HCT116 (cell line): ENCODE measurements at regions of chr16 and their contacts with region 1.

Region 1: DNA sequence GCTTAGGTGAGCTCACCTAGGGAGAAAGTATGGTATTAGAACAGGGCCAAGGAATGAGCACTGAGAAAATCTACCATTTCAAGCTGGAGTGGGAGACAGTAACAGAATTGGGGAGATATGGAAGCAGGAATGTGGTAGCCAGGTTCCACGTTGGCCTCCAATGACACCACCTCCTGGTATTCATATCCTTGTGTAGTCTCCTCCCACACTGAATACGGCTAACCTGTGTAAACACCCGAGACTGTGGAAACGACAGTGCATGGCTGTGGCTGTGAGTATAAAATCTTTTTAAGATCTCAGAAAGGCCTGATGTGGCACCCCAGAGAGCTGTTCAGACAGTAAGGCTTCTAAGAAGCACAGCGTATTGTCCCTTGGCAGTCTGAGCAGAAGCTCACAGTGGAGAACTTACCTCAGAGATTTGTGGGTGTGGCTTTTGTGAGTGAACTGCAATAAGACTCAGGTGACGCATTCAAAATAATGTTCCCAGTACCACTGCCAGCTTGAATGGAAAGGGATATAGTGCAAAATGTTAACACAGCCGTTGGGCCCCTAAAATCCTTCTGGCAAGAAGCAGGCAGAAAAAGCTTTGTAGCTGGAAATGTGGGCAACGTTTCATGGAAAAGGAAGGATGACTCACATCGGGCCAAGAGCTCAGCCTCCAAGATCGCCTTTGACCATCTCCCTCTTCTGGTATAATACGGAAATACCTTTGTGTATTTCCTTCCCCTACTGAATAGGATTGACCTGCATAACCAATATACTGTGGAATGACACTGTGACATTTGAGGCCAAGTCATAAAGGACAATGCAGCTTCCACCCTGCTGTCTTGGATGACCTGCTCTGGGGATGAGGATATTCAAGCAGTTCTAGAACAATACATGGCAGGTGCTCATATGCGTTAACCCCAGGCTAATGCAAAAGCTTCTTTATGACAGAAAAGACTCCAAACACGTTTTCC is 14.3 kb downstream of the SDR42E1 start:
- DNase-seq: peak; percentile 60
- ATAC-seq: peak; percentile 88
- H3K4me3 ChIP-seq: peak overlapping the region in 1 of 2 experiments; percentile 5; a peak in 1 of 4 replicates
- H3K27ac ChIP-seq: peak overlapping the region; percentile 40
- H3K4me1 ChIP-seq: peaks cover 19 to 23% of the 10 kb centered on the region in 2 experiments
- H3K27me3 ChIP-seq: no peaks in the 10 kb centered on the region
- CTCF ChIP-seq: peak; percentile 56 to 64 (median 57); a peak in 5 of 6 replicates
- POLR2A ChIP-seq: no peak
- RAD21 ChIP-seq: peak; percentile 67

Region 2: GRCh38 chr16:80751190-80751589 is 1245.8 kb before region 1 on chr16:
- CTCF ChIA-PET with region 1: no interaction called
- POLR2A ChIA-PET with region 1: no interaction called
- RAD21 ChIA-PET with region 1: no interaction called
- intact Hi-C with region 1: no loop called
- DNase-seq: no peak
- ATAC-seq: no peak
- H3K4me3 ChIP-seq: no peak overlapping the region
- H3K27ac ChIP-seq: no peak overlapping the region
- H3K4me1 ChIP-seq: no peaks in the 10 kb centered on the region
- H3K27me3 ChIP-seq: no peaks in the 10 kb centered on the region
- CTCF ChIP-seq: no peak
- POLR2A ChIP-seq: no peak
- RAD21 ChIP-seq: no peak

Region 3: DNA sequence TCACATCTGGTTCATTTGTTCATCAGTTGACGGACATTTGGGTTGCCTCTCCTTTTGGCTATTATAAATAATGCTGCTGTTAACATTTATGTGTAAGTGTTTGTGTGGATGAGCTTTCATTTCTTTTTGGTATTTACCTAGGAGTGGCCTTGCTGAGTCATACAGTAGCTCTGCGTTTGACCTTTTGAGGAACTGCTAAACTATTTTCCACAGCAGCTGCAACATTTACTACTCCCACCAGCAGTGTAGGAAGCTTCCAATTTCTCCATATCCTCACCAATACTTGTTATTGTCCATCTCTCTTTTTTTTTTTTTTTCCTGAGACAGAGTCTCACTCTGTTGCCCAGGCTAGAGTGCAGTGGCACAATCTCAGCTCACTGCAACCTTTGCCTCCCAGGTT is 238.6 kb before region 1 on chr16:
- CTCF ChIA-PET with region 1: no interaction called
- POLR2A ChIA-PET with region 1: no interaction called
- RAD21 ChIA-PET with region 1: no interaction called
- intact Hi-C with region 1: no loop called
- DNase-seq: peak; percentile 27
- ATAC-seq: peak; percentile 52
- H3K4me3 ChIP-seq: peak overlapping the region in 1 of 2 experiments; percentile 6; a peak in 1 of 4 replicates
- H3K27ac ChIP-seq: no peak overlapping the region
- H3K4me1 ChIP-seq: peaks cover 8 to 21% of the 10 kb centered on the region in 2 experiments
- H3K27me3 ChIP-seq: no peaks in the 10 kb centered on the region
- CTCF ChIP-seq: no peak
- POLR2A ChIP-seq: no peak
- RAD21 ChIP-seq: no peak

Region 4: DNA sequence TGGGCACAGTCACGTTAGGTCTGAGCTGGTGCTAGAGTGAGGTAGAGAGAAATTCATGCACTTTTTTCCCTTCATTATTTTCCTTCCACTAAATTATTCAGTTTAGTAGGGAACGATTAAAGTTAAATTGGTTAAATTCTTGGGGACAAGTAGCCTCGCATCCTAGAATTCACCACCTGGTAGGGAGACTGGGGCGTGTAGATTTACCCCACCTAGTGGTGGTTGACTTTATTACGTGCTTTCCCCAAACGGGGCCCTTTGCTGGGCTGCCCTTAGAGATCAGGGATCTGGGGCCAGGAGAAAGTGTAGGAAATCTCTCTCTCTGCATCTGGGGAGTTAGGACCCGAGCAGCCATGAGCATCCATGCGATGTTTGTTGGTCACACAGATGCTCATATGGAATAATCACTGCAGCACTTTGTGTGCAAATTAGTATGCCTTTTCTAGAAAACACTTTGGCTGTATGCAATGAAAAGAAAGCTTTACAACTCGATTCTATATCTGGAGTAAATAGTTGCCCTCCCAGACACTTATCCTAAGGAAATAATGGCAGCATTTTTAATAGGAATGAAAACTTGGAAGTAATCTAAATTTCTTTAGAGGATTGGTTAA is 110.9 kb before region 1 on chr16:
- CTCF ChIA-PET with region 1: interaction called, 8 read pairs
- POLR2A ChIA-PET with region 1: no interaction called
- RAD21 ChIA-PET with region 1: no interaction called
- intact Hi-C with region 1: loop called (anchors 1 kb)
- DNase-seq: peak; percentile 40
- ATAC-seq: peak; percentile 89
- H3K4me3 ChIP-seq: no peak overlapping the region
- H3K27ac ChIP-seq: no peak overlapping the region
- H3K4me1 ChIP-seq: no peaks in the 10 kb centered on the region
- H3K27me3 ChIP-seq: no peaks in the 10 kb centered on the region
- CTCF ChIP-seq: peak; percentile 67 to 89 (median 87); a peak in 5 of 6 replicates
- POLR2A ChIP-seq: no peak
- RAD21 ChIP-seq: peak; percentile 68

Region 5: DNA sequence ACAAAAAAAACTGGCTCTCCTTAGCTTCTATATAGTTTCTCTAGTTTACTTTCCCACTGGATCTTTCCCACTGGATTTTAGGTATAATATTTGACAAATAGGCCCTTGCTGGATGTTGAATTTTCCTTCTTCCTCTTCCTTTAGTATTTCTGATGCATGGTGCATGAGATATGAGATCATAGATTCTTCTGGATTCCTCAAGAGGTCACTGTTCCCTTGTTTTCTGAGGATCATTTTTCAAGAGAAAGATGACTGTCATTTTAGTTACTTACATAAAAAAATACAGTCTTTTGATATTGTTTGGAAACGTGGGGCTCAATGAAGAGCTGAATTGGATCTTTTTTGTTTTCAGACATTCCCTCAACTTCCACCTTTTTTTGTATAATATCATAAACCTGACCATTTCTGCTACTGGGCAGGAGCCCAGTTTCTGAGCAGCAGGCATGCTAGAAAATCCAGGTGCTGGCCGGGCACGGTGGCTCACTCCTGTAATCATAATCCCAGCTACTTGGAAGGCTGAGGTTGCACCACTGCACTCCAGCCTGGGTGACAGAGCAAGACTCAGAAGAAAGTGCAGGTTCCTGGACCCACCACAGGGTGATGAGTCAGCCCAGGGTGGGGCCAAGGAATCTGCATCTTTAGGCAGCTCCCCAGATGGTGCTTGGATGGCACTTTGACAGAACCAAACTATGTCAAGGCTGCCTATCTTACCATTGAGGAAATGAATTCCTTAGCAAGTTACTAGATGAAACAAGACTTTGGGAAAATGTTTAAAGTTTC is 56.0 kb before region 1 on chr16:
- CTCF ChIA-PET with region 1: interaction called, 35 read pairs
- POLR2A ChIA-PET with region 1: no interaction called
- RAD21 ChIA-PET with region 1: interaction called, 3 to 4 read pairs
- intact Hi-C with region 1: loop called (anchors 1 kb)
- DNase-seq: peak; percentile 57
- ATAC-seq: peak; percentile 88
- H3K4me3 ChIP-seq: no peak overlapping the region
- H3K27ac ChIP-seq: no peak overlapping the region
- H3K4me1 ChIP-seq: peaks cover 8 to 11% of the 10 kb centered on the region in 2 experiments; a peak in 3 of 4 replicates
- H3K27me3 ChIP-seq: no peaks in the 10 kb centered on the region
- CTCF ChIP-seq: peak; percentile 59 to 87 (median 81)
- POLR2A ChIP-seq: no peak
- RAD21 ChIP-seq: peak; percentile 83

Region 6: DNA sequence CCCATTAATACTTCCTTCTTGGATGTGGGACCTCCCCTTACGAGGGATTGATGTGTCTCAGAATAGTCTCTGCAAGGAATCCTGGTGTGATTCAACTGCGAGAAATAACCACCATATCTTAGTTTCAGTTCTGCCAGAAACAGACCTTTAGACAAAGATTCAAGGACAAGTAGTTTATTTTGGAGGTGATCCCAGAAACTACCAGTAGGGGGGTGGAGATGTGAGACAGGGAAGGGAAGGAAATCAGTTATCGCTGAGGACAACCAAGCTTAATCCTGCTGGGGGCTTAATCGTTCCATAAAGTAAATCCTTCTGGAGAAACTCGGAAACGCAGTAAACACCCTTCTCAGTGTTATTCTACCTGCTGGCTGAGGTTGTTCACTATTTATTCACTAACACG is 19.3 kb after region 1 on chr16:
- CTCF ChIA-PET with region 1: interaction called, 10 read pairs
- POLR2A ChIA-PET with region 1: interaction called, 8 read pairs
- RAD21 ChIA-PET with region 1: no interaction called
- intact Hi-C with region 1: no loop called
- DNase-seq: peak; percentile 52
- ATAC-seq: peak; percentile 67
- H3K4me3 ChIP-seq: peak overlapping the region; percentile 7 to 13; a peak in 3 of 4 replicates
- H3K27ac ChIP-seq: no peak overlapping the region
- H3K4me1 ChIP-seq: peaks cover 0 to 13% of the 10 kb centered on the region in 2 experiments; a peak in 2 of 4 replicates
- H3K27me3 ChIP-seq: peaks cover 24% of the 10 kb centered on the region
- CTCF ChIP-seq: peak; percentile 21 to 70 (median 69); a peak in 4 of 6 replicates
- POLR2A ChIP-seq: no peak
- RAD21 ChIP-seq: peak; percentile 26; the same call in 1 of the 2 replicates

Region 7: DNA sequence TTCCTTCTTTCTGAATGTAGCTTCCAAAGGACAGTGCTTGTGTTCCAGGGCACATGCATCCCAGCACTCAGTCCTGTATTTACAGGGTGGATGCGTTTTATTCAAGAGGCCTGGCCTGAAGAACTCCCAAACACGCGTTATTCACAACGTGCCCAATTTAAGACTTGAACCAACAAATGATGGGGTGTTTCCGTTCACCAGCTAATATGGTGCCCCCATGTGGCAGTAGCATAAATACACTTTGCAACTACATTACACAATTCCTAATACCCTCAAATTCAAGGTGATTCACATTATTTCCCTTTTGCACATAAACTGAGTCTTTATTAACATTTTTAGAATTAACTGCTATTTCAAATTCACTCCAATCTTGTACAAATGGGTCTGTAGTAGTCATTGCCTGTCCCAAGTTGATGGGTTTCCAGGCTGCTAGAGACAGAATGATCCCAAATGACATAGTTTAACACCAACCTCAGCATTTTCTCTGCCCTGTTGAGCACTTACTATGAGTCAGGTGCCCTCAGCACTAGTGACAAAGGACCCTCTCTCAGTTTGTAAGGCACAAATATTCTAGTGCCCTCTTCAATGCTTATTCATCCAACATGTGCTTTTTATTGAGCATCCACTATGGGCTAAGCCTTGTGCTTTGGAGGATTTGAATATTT is 65.0 kb after region 1 on chr16:
- CTCF ChIA-PET with region 1: interaction called, 10 read pairs
- POLR2A ChIA-PET with region 1: no interaction called
- RAD21 ChIA-PET with region 1: no interaction called
- intact Hi-C with region 1: no loop called
- DNase-seq: peak; percentile 64
- ATAC-seq: peak; percentile 85
- H3K4me3 ChIP-seq: no peak overlapping the region
- H3K27ac ChIP-seq: no peak overlapping the region
- H3K4me1 ChIP-seq: no peaks in the 10 kb centered on the region
- H3K27me3 ChIP-seq: peaks cover 54% of the 10 kb centered on the region
- CTCF ChIP-seq: peak; percentile 74 to 88 (median 77)
- POLR2A ChIP-seq: no peak
- RAD21 ChIP-seq: peak; percentile 81

Region 8: GRCh38 chr16:82072313-82072712 is 75.4 kb after region 1 on chr16:
- CTCF ChIA-PET with region 1: no interaction called
- POLR2A ChIA-PET with region 1: no interaction called
- RAD21 ChIA-PET with region 1: no interaction called
- intact Hi-C with region 1: no loop called
- DNase-seq: no peak
- ATAC-seq: no peak
- H3K4me3 ChIP-seq: no peak overlapping the region
- H3K27ac ChIP-seq: no peak overlapping the region
- H3K4me1 ChIP-seq: peaks cover 0 to 6% of the 10 kb centered on the region in 2 experiments; a peak in 1 of 4 replicates
- H3K27me3 ChIP-seq: peaks cover 40% of the 10 kb centered on the region; the same call in 1 of the 2 replicates
- CTCF ChIP-seq: no peak
- POLR2A ChIP-seq: no peak
- RAD21 ChIP-seq: no peak

Region 9: DNA sequence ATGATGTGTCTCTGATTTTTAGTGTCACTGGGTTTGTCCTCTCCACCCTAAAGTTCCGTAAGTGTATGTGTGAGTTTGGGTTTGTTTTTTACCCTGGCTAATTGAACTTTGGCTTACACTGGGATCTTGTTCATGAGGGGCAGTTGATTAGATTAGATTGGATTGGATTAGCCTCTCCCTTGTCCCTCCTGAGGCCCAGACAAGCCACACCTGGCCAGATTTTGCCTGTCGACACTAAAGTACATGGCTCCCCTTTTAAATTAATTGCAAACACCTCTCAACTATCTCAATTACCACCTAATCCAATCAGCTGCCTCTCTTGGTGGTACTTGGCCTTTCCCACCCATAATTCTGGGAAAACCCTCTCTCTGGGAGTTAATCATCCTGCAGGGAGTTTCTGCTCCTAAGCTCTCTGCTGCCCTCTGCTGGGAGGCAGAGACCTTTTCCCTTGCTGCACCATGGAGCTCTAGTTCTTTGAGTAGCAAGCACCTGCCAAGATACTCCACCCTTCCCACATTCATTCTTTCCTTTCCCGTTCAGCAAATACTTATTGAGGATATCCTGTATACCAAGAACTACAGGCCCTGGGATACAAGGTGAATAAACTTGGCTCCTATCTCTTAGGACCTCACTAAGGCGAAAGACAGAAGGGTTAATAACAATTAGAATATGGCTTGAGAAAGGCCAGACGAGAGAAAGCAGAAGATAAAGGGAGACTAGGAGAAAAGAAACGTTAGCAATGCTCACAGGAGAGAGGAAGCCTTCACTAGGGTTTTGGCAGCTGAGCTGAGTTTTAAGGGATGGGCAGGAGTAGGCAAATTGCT is 233.1 kb after region 1 on chr16:
- CTCF ChIA-PET with region 1: interaction called, 27 read pairs
- POLR2A ChIA-PET with region 1: no interaction called
- RAD21 ChIA-PET with region 1: no interaction called
- intact Hi-C with region 1: no loop called
- DNase-seq: peak; percentile 70
- ATAC-seq: peak; percentile 97
- H3K4me3 ChIP-seq: no peak overlapping the region
- H3K27ac ChIP-seq: no peak overlapping the region
- H3K4me1 ChIP-seq: no peaks in the 10 kb centered on the region
- H3K27me3 ChIP-seq: peaks cover 56% of the 10 kb centered on the region
- CTCF ChIP-seq: peak; percentile 90 to 99 (median 99)
- POLR2A ChIP-seq: no peak
- RAD21 ChIP-seq: peak; percentile 93

Region 10: DNA sequence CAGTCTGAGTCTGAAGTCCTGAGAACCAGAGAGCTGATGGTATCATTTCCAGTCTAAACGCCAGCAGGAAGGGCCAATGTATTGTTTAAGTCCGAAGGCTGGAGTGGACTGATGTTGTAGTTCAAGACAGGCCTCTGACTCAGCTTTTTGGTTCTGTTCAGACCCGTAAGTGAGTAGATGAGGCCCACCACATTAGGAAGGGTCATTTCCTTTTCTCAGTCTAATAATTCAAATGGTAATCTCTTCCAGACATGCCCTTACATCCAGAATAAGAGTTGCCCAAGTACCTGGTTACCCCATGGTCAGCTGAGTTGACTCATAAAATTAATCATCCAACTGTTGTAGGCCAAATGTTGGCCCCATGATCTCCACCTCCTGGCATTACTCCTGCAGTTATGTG is 1368.2 kb after region 1 on chr16:
- CTCF ChIA-PET with region 1: no interaction called
- POLR2A ChIA-PET with region 1: no interaction called
- RAD21 ChIA-PET with region 1: no interaction called
- intact Hi-C with region 1: no loop called
- DNase-seq: no peak
- ATAC-seq: no peak
- H3K4me3 ChIP-seq: no peak overlapping the region
- H3K27ac ChIP-seq: no peak overlapping the region
- H3K4me1 ChIP-seq: no peaks in the 10 kb centered on the region
- H3K27me3 ChIP-seq: no peaks in the 10 kb centered on the region; the same call in 1 of the 2 replicates
- CTCF ChIP-seq: no peak
- POLR2A ChIP-seq: no peak
- RAD21 ChIP-seq: no peak